GM13976 (cell line): ENCODE measurements at regions of chr2 and their contacts with region 1.

Region 1: GRCh38 chr2:158923180-158923594 is 45.3 kb upstream of the TANC1 start:
- DNase-seq: no peak
- CTCF ChIP-seq: no peak

Region 2: DNA sequence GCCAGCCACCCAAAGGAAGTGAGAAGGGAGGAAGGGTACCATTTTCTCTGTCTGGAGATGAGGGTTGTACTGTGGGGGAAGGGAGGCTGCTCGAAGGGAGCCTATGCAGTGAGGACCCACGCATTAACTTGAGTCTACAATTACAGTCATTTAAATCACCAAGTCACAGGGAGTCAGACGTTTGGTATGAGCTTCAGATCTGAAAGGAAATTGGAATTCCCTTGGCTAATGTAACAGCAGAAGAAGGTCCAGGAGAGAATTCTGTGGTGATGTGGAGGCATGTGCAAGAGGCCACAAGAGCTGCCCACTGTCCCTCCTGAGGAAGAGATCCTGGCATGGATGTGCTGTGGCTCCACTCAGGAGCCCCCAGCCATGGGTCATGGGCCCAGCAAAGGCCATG is 105.6 kb before region 1 on chr2:
- in situ Hi-C with region 1: no loop called
- DNase-seq: no peak
- CTCF ChIP-seq: no peak

Region 3: DNA sequence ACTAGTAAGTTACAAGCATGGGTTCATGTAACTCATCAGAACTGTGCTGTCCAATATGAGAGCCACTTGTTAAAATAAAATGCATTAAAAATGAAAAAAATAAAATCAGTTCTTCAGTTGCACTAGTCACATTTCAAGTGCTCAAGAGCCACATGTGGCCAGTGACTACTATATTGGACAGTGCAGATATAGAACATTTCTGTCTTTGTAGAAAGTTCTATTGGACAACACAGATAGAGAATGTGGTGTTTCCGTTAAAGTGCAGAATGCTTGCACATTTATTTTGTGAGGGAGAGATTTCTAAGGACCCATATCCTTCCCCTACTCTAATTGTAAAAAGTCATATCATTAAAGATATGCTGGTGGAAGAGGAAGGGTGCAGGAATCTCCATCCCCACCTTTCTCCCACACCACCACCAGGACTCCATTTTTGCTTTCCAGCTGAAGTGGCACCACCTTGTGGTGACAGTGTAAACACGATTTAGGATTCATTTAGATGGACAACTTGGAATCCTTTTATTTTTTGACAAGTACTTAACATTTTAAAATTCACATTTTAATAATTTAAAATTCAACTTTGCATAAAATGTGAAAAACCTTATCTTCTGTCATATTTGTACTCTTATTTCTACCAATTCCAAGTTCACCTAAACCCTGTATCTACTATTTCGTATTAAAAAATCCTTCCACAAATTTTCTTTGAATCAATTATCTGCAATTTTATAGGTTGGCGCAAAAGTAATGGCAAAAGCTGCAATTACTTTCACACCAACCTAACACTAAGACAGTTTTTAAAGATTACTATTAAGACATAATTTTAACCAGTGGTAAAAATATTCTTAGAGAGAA is 884.2 kb after region 1 on chr2:
- in situ Hi-C with region 1: loop called (anchors 25 kb)
- DNase-seq: no peak
- CTCF ChIP-seq: peak; percentile 57

Region 4: GRCh38 chr2:159982270-159982669 is 1059.1 kb after region 1 on chr2:
- in situ Hi-C with region 1: loop called (anchors 25 kb)
- DNase-seq: no peak
- CTCF ChIP-seq: no peak

Region 5: DNA sequence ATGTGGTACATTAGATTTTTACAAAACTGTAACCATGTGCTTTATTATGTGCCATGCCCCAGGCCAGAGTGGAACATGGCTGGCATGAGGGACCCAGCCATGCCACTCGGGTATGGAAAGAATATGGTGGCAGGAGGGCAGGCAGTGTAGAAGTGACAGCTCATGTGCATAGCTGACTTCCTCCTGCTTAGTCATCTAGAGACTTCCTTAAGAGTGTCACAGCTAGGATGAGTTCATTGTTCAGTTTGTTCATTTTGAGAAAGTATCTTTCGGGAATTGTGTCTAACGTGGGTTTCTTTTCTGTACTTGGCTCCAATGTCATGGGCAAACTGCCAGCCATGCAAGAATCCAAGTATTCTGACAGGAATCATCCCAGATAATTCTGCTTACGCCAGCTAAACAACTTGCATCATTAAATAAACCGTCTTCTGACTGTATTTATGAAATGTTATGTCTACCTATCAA is 1371.2 kb after region 1 on chr2:
- in situ Hi-C with region 1: no loop called
- DNase-seq: no peak
- CTCF ChIP-seq: no peak